ENCODE measurements at regions of chr17 and their contacts with region 1.

Region 1: GRCh38 chr17:164303-165235 is 16.9 kb downstream of the DOC2B start:
- DNase-seq: peak; percentile 59
- ATAC-seq: peak; percentile 77
- H3K4me3 Mint-ChIP-seq: no peak overlapping the region
- H3K27ac Mint-ChIP-seq: peak overlapping the region; percentile 69
- H3K4me1 Mint-ChIP-seq: no peaks in the 10 kb centered on the region
- H3K27me3 Mint-ChIP-seq: no peaks in the 10 kb centered on the region
- CTCF ChIP-seq: no peak

Region 2: GRCh38 chr17:177155-177554 is 12.6 kb after region 1 on chr17:
- CTCF ChIA-PET with region 1: interaction called, 10 read pairs
- POLR2A ChIA-PET with region 1: no interaction called
- DNase-seq: no peak
- ATAC-seq: no peak
- H3K4me3 Mint-ChIP-seq: no peak overlapping the region
- H3K27ac Mint-ChIP-seq: no peak overlapping the region
- H3K4me1 Mint-ChIP-seq: peaks cover 4% of the 10 kb centered on the region
- H3K27me3 Mint-ChIP-seq: peaks cover 27% of the 10 kb centered on the region
- CTCF ChIP-seq: no peak

Region 3: DNA sequence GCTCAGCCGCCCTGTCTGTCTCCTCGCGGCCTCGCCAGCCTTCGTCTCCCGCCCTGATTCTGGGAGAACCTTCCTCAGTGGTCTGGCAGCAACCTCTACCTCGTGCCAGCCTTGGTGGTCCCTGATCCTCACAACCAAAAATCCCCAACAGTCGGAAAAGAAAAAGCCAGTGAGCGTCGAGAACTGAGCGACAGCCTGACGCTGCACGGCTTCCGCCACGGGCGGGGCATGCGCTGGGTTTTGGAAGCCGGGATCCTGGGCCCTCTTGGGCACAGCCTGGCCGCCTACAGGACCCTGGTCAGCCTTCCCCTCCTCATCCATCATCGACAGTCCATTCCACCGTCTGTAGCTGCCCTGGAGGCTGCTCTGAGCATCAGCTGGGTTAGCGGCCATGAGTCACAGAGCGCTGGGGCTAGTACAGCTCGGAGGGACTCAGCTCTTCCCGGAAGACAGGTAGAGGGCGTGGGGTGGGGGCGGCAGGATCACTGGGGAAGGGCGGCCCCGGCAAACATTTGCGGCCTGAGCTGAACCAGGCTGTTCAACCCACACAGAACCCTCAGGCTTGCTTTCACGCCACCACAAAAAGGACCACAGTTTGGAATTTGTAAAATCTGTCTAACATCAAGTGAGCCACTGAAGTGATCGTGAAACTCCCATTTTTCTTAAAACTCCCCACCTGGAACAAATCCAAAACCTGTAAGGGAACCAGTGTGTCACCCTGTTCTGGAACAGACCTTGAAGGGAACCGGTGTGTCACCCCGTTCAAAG is 72.3 kb after region 1 on chr17:
- CTCF ChIA-PET with region 1: no interaction called
- POLR2A ChIA-PET with region 1: no interaction called
- DNase-seq: peak; percentile 11
- ATAC-seq: peak; percentile 48
- H3K4me3 Mint-ChIP-seq: no peak overlapping the region
- H3K27ac Mint-ChIP-seq: peak overlapping the region; percentile 80; the same call in 1 of the 2 replicates
- H3K4me1 Mint-ChIP-seq: peaks cover 36% of the 10 kb centered on the region
- H3K27me3 Mint-ChIP-seq: no peaks in the 10 kb centered on the region
- CTCF ChIP-seq: no peak

Measured in WTC11 (cell line).